ENCODE measurements at regions of chr10 and their contacts with region 1.

Region 1: DNA sequence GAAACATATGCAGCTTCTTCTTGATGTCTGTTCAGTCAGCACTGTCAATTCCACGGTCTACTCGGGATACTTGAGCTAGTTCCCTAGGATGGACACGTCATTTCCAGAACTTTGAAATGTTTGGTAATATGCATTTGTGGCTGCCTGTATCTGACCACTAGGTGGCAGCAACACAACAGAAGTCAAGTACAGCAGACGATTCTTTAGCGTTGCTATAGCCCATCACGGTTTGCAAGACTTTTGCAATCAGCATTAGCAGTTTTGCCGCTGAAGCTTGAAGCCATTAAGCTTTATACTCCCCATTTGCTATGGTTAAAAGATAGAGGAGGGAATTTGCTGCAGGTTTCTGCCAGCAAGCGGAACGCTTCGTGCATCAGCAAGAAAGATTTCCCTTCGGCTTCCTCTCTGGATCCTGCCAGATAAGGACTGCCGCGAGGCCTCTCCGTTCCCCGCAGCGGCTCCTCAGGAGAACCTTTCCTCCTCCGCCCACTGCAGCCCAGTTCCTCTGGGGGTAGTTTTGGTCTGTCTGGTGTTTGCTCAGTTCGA is 63.5 kb downstream of the ABCC2 start:
- DNase-seq: peak; percentile 86
- ATAC-seq: peak; percentile 89
- H3K4me3 ChIP-seq: no peak overlapping the region
- H3K27ac ChIP-seq: 0 out of 2 replicates have a peak overlapping the region, but pooled peaks have one; percentile 2
- H3K4me1 ChIP-seq: no peaks in the 10 kb centered on the region
- H3K27me3 ChIP-seq: no peaks in the 10 kb centered on the region
- CTCF ChIP-seq: peak; percentile 95 to 100 (median 97)
- POLR2A ChIP-seq: no peak
- RAD21 ChIP-seq: peak; percentile 99

Region 2: DNA sequence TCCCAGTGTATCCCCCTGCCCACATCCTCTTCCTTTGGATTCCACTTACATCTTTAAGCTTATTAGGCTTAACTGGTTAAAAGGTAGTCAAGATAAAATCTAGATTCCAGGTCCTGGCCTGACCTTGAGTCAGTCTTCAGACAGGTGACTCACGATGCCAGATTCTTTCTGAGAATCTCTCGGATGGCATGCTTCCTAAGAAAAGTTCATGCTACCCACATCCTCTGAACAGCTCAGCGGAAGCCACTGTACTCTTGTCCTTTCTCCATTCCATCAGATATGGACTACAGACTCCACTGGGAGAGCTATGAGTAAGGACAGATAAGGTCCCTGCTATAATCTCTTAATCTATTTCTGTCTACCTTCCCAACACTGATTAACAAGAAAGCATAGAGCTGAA is 120.4 kb after region 1 on chr10:
- CTCF ChIA-PET with region 1: interaction called, 14 read pairs
- POLR2A ChIA-PET with region 1: no interaction called
- RAD21 ChIA-PET with region 1: interaction called in 1 of 2 experiments, 3 read pairs
- intact Hi-C with region 1: no loop called
- DNase-seq: peak; percentile 89
- ATAC-seq: peak; percentile 83
- H3K4me3 ChIP-seq: peak overlapping the region in 1 of 2 experiments; percentile 13; a peak in 2 of 4 replicates
- H3K27ac ChIP-seq: peak overlapping the region; percentile 98
- H3K4me1 ChIP-seq: peaks cover 66 to 79% of the 10 kb centered on the region in 2 experiments
- H3K27me3 ChIP-seq: no peaks in the 10 kb centered on the region
- CTCF ChIP-seq: no peak
- POLR2A ChIP-seq: no peak
- RAD21 ChIP-seq: peak; percentile 39

Region 3: GRCh38 chr10:100100651-100101184 is 254.8 kb after region 1 on chr10:
- CTCF ChIA-PET with region 1: interaction called, 9 read pairs
- POLR2A ChIA-PET with region 1: interaction called, 3 read pairs
- RAD21 ChIA-PET with region 1: no interaction called
- intact Hi-C with region 1: loop called (anchors 5 kb)
- DNase-seq: peak; percentile 29
- ATAC-seq: peak; percentile 80
- H3K4me3 ChIP-seq: no peak overlapping the region
- H3K27ac ChIP-seq: no peak overlapping the region
- H3K4me1 ChIP-seq: no peaks in the 10 kb centered on the region
- H3K27me3 ChIP-seq: no peaks in the 10 kb centered on the region
- CTCF ChIP-seq: peak; percentile 45 to 62 (median 54)
- POLR2A ChIP-seq: no peak
- RAD21 ChIP-seq: peak; percentile 89

Region 4: GRCh38 chr10:100239851-100240250 is 393.9 kb after region 1 on chr10:
- CTCF ChIA-PET with region 1: interaction called, 11 read pairs
- POLR2A ChIA-PET with region 1: no interaction called
- RAD21 ChIA-PET with region 1: no interaction called
- intact Hi-C with region 1: loop called (anchors 5 kb)
- DNase-seq: no peak
- ATAC-seq: no peak
- H3K4me3 ChIP-seq: no peak overlapping the region
- H3K27ac ChIP-seq: no peak overlapping the region
- H3K4me1 ChIP-seq: no peaks in the 10 kb centered on the region
- H3K27me3 ChIP-seq: no peaks in the 10 kb centered on the region
- CTCF ChIP-seq: no peak
- POLR2A ChIP-seq: no peak
- RAD21 ChIP-seq: no peak

Region 5: GRCh38 chr10:100433253-100434240 is 587.6 kb after region 1 on chr10:
- CTCF ChIA-PET with region 1: interaction called, 4 read pairs
- POLR2A ChIA-PET with region 1: no interaction called
- RAD21 ChIA-PET with region 1: no interaction called
- intact Hi-C with region 1: loop called (anchors 10 kb)
- DNase-seq: peak; percentile 97
- ATAC-seq: peak; percentile 96
- H3K4me3 ChIP-seq: no peak overlapping the region
- H3K27ac ChIP-seq: no peak overlapping the region
- H3K4me1 ChIP-seq: peaks cover 0 to 9% of the 10 kb centered on the region in 2 experiments; a peak in 2 of 4 replicates
- H3K27me3 ChIP-seq: no peaks in the 10 kb centered on the region
- CTCF ChIP-seq: peak; percentile 100
- POLR2A ChIP-seq: no peak
- RAD21 ChIP-seq: peak; percentile 100